Body of pancreas (tissue), 4 donors: ENCODE measurements at regions of chr19 and their contacts with region 1.

Region 1: DNA sequence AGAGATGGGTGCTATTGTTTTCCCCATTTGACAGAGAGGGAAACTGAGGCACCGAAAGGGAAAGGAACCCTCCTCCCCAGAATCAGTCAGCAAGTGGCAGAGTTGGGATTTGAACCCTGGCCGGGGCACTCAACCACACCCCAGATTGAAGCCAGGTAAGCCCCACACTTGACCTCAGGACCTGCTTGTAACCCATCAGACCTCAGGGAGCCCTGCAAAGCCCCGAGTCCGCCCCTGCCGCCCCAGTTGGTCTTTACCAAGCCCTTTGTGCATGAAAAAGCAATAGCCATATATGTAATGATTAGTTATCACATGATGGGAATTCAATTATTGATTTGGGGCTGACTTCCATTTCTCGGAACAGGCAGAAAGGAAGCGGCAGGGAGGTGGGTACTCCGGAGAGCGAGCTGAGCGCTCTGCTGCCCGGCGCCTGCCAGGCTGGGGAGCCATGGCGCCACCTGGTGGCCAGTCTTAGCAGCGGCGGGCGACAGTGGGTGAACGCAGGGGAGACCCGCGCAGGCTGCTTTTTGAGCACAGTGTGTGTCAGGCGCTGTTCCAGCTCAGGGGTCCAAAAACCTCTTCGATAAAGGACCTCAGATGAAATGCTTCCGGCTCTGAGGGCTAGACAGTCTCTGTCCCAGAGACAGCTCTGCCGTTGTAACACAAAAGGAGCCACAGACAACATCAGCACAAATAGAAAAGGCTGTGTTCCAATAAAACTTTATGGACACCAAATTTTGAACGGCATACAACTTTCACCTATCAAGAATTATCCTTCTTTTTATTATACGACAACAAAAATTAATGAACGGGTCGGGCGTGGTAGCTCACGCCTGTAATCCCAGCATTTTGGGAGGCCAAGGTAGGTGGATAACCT is 82.9 kb upstream of the CACNA1A start:
- DNase-seq: peak; percentile 62 to 72 (median 67)
- ATAC-seq: peak; percentile 69
- H3K4me3 ChIP-seq: no peak overlapping the region
- H3K27ac ChIP-seq: no peak overlapping the region
- H3K4me1 ChIP-seq: no peaks in the 10 kb centered on the region
- H3K27me3 ChIP-seq: peaks cover 0 to 4% of the 10 kb centered on the region in 2 donors
- CTCF ChIP-seq: peak; percentile 75 to 95 (median 82)
- POLR2A ChIP-seq: no peak

Region 2: GRCh38 chr19:13281567-13282291 is 307.5 kb before region 1 on chr19:
- intact Hi-C with region 1: loop called (anchors 5 kb)
- DNase-seq: no peak
- ATAC-seq: no peak
- H3K4me3 ChIP-seq: no peak overlapping the region
- H3K27ac ChIP-seq: no peak overlapping the region
- H3K4me1 ChIP-seq: peaks cover 5% of the 10 kb centered on the region
- H3K27me3 ChIP-seq: no peaks in the 10 kb centered on the region
- CTCF ChIP-seq: no peak
- POLR2A ChIP-seq: no peak

Region 3: GRCh38 chr19:13718733-13719132 is 129.5 kb after region 1 on chr19:
- intact Hi-C with region 1: no loop called
- DNase-seq: peak in 3 of 4 donors; percentile 27 to 32 (median 28)
- ATAC-seq: no peak
- H3K4me3 ChIP-seq: no peak overlapping the region
- H3K27ac ChIP-seq: no peak overlapping the region
- H3K4me1 ChIP-seq: no peaks in the 10 kb centered on the region
- H3K27me3 ChIP-seq: no peaks in the 10 kb centered on the region
- CTCF ChIP-seq: no peak
- POLR2A ChIP-seq: no peak